Activated naive CD4-positive, alpha-beta T cell treated with anti-CD3 and anti-CD28 coated beads for 36 hours (primary cell): ENCODE measurements at regions of chr5 and their contacts with region 1.

Region 1: DNA sequence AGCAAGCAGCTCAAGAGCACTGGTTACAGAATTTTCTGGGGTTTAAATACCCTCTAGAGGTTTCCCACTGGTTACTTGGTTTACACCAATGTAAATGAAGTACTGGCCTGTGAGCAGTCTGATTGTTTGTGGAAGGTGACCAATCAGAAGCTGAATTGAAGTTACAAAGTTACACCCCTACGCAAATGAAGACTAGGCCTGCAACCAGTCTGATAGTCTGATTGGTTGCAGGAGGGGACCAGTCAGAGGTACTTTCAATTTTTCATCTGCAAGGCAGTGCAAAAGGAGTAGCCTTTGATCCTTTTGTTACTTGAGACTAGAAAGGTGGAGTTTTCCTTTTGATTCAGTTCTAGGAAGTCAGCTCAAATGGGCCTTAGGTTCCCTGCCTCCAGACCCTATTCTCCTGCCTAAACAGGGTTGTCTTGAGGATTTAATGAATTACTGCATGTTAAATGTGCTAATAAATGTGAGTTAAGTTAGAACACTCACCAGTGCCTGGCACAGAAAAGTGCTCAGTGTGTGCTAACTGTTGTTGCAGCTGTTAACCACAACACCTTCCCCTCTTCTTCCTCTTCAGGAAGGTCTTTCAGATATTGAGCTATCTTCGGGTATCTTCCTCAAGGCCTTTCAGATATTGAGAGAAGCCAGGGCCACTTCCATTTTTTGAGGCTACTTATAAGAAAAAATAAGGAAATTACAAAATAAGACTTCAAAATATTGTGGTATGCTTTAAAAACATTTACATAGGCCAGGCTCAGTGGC is 32.1 kb upstream of the CLINT1 start:
- DNase-seq: no peak
- H3K4me3 Mint-ChIP-seq: no peak overlapping the region
- H3K27ac Mint-ChIP-seq: no peak overlapping the region
- H3K4me1 Mint-ChIP-seq: peaks cover 17% of the 10 kb centered on the region
- H3K27me3 Mint-ChIP-seq: no peaks in the 10 kb centered on the region

Region 2: DNA sequence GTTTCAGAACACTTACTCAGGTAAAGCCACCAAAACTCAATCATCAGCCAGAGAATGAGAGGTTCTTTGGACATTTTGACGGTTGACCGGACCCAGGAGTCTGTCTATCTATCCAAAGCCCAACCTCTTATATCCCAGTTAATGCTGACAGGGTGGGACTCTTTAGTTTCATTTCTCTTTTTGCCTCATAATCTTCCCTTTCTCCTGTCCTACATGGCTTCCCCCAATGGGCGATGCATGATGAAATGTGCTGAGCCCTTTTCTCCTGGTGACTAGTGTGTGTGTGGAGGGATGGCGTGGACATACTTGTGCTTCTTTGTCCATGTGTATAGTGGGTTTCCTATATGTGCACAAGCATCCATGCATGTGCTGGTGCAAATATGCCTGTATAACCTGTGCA is 927.9 kb before region 1 on chr5 and contains the start of gene TIMD4:
- CTCF ChIA-PET with region 1: no interaction called
- intact Hi-C with region 1: no loop called
- DNase-seq: no peak
- H3K4me3 Mint-ChIP-seq: no peak within 1 kb of the TSS
- H3K27ac Mint-ChIP-seq: no peak within 1 kb of the TSS
- H3K4me1 Mint-ChIP-seq: no peaks in the 10 kb centered on the region
- H3K27me3 Mint-ChIP-seq: no peaks in the 10 kb centered on the region
- total RNA-seq, gene TIMD4: 3.4 to 5.2 TPM

Region 3: DNA sequence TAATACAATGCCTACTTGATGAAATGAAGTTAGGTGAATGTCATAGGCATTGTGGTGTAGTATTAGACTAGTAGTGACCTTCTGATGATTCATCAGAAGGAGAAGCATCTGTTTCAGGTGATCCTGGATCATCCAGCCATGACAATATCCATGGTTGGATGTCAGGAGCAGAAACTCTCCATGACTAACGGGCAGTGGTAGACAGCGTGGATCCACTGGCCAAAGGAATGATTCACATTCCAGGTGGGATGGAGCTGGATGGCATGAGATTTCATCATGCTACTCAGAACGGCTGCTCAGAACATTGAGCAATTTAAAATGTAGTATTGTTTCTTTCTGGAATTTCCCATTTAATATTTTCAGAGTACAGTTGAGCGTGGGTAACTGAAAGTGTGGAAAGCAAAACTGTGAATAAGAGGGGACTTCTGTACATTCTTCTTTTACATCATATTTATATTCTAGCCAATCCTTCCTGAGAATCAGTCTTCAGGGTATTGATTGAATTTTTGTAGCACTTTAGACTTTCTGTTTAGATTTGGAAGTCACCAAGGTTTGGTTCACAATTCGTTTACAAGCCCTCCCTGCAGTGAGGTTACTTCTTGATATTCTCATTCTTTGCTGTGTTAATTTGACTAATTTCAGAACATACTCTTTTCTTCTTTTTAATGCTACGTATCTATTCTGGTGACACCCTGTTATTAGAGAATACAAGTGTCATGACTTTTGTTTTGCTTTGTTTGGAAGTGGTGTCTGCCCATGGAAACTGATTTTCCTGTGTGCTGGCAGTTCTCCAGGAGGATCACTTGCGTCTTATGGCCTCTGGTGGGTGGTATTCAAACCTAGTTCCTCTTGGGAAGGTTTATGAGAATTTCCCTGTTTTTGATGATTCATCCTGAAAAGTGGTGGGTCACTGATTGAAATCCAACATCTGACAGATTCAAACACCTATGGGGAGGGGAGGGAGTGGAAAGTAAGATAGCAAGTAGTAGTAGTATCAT is 19.9 kb before region 1 on chr5:
- CTCF ChIA-PET with region 1: no interaction called
- intact Hi-C with region 1: loop called (anchors 2 kb)
- DNase-seq: no peak
- H3K4me3 Mint-ChIP-seq: no peak overlapping the region
- H3K27ac Mint-ChIP-seq: peak overlapping the region; percentile 32
- H3K4me1 Mint-ChIP-seq: peaks cover 15% of the 10 kb centered on the region
- H3K27me3 Mint-ChIP-seq: no peaks in the 10 kb centered on the region

Region 4: DNA sequence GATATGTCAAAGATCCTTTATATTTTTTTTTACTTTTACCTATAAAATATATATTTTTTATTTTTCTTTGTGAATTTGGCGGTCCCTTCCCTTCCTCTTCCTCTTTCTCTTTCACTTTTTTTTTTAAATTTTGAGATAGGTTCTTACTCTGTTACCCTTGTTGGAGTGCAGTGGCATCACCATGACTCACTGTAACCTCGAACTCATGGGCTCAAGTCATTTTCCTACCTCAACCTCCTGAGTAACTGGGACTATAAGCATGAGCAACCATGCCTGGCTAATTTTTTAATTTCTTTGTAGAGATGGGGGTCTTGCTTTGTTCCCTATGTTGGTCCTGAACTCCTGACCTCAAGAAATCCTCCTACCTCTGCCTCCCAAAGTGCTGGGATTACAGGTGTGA is 225.9 kb after region 1 on chr5:
- CTCF ChIA-PET with region 1: no interaction called
- intact Hi-C with region 1: no loop called
- DNase-seq: no peak
- H3K4me3 Mint-ChIP-seq: no peak overlapping the region
- H3K27ac Mint-ChIP-seq: no peak overlapping the region
- H3K4me1 Mint-ChIP-seq: no peaks in the 10 kb centered on the region
- H3K27me3 Mint-ChIP-seq: peaks cover 15% of the 10 kb centered on the region